ENCODE measurements at regions of chr14 and their contacts with region 1.

Region 1: GRCh38 chr14:80850197-80850814 is 91.2 kb downstream of the CEP128 start:
- DNase-seq: no peak
- H3K4me3 Mint-ChIP-seq: no peak overlapping the region
- H3K27ac Mint-ChIP-seq: no peak overlapping the region
- H3K4me1 Mint-ChIP-seq: no peaks in the 10 kb centered on the region
- H3K27me3 Mint-ChIP-seq: no peaks in the 10 kb centered on the region
- CTCF ChIP-seq: peak; percentile 39

Region 2: GRCh38 chr14:78967110-78967809 is 1883.0 kb before region 1 on chr14:
- CTCF ChIA-PET with region 1: no interaction called
- intact Hi-C with region 1: loop called (anchors 5 kb)
- DNase-seq: no peak
- H3K4me3 Mint-ChIP-seq: no peak overlapping the region
- H3K27ac Mint-ChIP-seq: no peak overlapping the region
- H3K4me1 Mint-ChIP-seq: no peaks in the 10 kb centered on the region
- H3K27me3 Mint-ChIP-seq: peaks cover 36% of the 10 kb centered on the region
- CTCF ChIP-seq: no peak

Region 3: DNA sequence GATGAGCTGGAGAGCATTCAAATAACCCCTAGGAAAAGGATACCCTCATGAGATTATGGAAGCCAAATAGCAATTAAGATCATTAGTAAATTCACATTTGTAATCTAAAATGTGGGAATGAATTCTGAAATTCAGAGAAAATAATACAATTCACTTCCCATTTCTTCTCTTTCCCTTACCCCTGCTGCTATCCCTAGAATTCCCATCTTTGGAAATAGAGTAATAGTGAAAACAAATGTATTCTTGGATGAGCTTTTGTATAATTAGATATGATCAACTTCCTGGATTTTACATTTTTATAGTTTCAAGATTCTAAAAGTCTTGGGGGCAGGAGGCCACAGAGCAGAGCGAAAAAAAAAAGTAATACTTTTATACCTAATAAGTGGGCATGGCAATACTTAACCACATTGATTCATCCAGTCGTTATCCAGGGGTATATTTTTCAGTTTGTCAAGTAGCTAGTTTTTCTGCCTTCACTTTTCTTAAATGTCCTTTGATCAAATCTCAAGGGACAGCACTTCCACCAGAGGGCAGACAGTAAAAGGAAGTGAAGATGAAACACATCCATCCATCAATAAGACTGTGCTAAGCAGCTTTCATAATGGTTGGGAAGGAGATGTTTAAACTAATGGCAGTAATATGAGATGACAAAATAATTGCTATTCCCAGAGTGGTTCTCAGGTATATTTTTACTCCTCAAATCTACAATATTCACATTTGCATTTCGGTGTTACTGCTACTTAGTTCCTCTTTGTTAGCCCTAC is 1040.3 kb before region 1 on chr14:
- CTCF ChIA-PET with region 1: no interaction called
- intact Hi-C with region 1: loop called (anchors 2 kb)
- DNase-seq: peak; percentile 30
- H3K4me3 Mint-ChIP-seq: no peak overlapping the region
- H3K27ac Mint-ChIP-seq: no peak overlapping the region
- H3K4me1 Mint-ChIP-seq: peaks cover 1% of the 10 kb centered on the region
- H3K27me3 Mint-ChIP-seq: no peaks in the 10 kb centered on the region
- CTCF ChIP-seq: peak; percentile 31

Region 4: DNA sequence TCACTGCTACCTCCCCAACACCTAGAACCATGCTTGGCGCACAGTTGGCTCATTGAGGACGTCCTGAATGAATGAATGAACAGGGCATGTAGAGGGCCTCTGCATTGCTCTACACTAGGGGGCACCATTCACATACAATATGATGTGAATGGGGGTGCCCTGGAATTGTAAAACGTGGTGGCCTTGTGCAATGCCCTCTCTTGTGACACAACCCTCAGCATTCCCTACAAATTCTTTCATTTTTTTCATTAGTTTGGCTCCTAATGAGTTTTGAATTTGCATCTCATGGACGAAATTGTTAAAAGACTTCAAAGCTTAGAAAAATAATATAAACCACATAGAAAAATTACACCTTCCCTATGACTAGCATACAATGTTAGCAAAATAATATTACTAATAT is 636.7 kb before region 1 on chr14:
- CTCF ChIA-PET with region 1: interaction called, 3 read pairs
- intact Hi-C with region 1: loop called (anchors 1 kb)
- DNase-seq: peak; percentile 61
- H3K4me3 Mint-ChIP-seq: no peak overlapping the region
- H3K27ac Mint-ChIP-seq: no peak overlapping the region
- H3K4me1 Mint-ChIP-seq: no peaks in the 10 kb centered on the region
- H3K27me3 Mint-ChIP-seq: peaks cover 8% of the 10 kb centered on the region
- CTCF ChIP-seq: peak; percentile 41

Region 5: GRCh38 chr14:80356413-80356812 is 493.9 kb before region 1 on chr14:
- CTCF ChIA-PET with region 1: no interaction called
- intact Hi-C with region 1: loop called (anchors 10 kb)
- DNase-seq: peak; percentile 5
- H3K4me3 Mint-ChIP-seq: no peak overlapping the region
- H3K27ac Mint-ChIP-seq: no peak overlapping the region
- H3K4me1 Mint-ChIP-seq: no peaks in the 10 kb centered on the region
- H3K27me3 Mint-ChIP-seq: no peaks in the 10 kb centered on the region
- CTCF ChIP-seq: no peak

Region 6: DNA sequence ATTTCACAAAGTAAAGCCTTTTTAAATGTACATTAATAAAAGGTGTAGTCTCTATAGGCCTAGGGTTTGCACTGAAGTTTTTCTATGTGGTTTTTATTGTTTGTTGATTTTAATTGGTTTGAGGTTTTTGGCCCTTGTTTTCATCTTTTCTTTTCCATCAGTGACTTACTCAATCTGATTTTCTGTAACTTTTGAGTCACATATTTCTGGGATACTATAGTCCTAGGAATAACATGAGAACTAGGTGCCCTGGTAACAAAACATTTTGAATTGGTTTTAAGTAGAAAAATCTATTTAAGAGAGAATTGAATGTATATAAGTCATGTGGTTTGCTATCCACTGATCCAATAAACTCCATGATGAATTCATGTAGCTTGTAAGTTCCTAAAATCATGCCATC is 220.7 kb before region 1 on chr14:
- CTCF ChIA-PET with region 1: no interaction called
- intact Hi-C with region 1: no loop called
- DNase-seq: no peak
- H3K4me3 Mint-ChIP-seq: no peak overlapping the region
- H3K27ac Mint-ChIP-seq: no peak overlapping the region
- H3K4me1 Mint-ChIP-seq: peaks cover 4% of the 10 kb centered on the region
- H3K27me3 Mint-ChIP-seq: no peaks in the 10 kb centered on the region
- CTCF ChIP-seq: no peak

Measured in Calu3 (cell line).